H1 (cell line): ENCODE measurements at regions of chr6 and their contacts with region 1.

Region 1: DNA sequence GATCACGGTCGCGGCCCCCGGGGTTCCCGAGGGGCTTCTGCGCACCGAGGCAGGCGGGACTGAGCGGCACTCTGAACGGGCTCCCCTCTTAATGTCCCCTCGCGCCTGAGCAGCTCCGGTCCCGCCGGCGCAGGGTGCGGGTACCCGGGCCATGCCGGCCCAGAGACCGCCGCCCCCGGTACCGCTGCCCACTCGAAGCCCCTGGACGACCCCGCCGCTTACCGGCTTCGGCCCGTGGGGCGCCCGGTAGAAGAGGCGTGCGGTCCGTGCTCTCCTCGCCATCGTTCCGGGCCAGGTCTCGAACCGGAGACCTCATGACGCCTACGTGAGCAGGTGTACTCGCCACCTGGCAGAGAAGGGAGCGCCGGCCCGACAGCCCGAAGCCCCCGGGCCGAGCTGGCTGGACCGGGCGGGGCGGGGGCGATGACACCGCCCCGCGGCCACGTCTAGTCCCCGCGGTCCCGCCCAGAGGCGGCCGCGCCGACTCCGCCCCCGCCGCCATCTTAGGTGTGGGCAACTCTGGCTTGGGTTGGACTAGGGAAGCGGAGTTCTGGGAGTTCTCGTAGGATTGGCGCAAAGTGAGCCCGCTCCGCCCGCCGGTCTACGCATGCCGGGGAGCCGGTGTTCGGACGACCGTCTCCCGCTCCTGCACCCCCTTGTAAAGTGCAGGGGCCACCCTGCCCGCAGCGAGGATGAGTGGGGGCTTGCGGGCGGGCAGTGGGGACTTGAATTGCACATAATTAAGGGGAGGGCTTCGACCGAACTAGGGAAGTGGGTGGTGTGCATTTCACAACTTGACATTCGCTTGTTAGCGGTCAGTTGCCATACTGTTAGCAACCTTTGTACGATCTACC is at the start of gene SLC17A5:
- DNase-seq: peak; percentile 87 to 94
- H3K4me3 ChIP-seq: peak within 1 kb of the TSS; percentile 63 to 99 (median 86)
- H3K27ac ChIP-seq: peak within 1 kb of the TSS; percentile 71; the same call in 1 of the 2 replicates
- H3K4me1 ChIP-seq: peaks cover 0 to 9% (median 5%) of the 10 kb centered on the region in 4 experiments; a peak in 3 of 7 replicates
- H3K27me3 ChIP-seq: no peaks in the 10 kb centered on the region
- CTCF ChIP-seq: no peak
- EP300 ChIP-seq: 0 out of 3 replicates have a peak, but pooled peaks of 1 of the 2 experiments have one; percentile 38
- POLR2A ChIP-seq: peak; percentile 63 to 82
- RAD21 ChIP-seq: no peak
- total RNA-seq, gene SLC17A5: 11.9 and 14.2 TPM in 2 replicates

Region 2: DNA sequence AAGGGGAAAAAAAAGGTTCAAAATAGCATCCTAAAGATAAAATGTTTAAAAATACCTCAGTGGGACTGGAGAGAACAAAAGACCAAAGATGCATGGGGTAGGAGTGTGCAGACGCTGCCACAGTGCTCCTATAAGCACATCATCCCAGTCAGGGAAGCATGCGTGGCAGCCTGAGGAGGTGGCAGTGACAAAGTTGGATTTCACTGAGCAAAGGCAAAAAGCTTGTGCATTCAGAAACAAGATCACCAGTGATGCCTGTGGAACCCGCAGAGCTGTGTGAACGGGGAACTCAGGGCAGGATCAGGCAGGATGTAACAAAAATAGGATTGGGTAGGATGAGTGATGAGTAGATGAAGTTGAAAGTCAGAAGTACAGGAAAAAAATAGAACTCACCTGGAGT is 1651.4 kb before region 1 on chr6:
- CTCF ChIA-PET with region 1: no interaction called
- POLR2A ChIA-PET with region 1: no interaction called
- DNase-seq: no peak
- H3K4me3 ChIP-seq: no peak overlapping the region
- H3K27ac ChIP-seq: no peak overlapping the region
- H3K4me1 ChIP-seq: no peaks in the 10 kb centered on the region
- H3K27me3 ChIP-seq: no peaks in the 10 kb centered on the region
- CTCF ChIP-seq: no peak
- EP300 ChIP-seq: no peak
- POLR2A ChIP-seq: no peak
- RAD21 ChIP-seq: no peak

Region 3: DNA sequence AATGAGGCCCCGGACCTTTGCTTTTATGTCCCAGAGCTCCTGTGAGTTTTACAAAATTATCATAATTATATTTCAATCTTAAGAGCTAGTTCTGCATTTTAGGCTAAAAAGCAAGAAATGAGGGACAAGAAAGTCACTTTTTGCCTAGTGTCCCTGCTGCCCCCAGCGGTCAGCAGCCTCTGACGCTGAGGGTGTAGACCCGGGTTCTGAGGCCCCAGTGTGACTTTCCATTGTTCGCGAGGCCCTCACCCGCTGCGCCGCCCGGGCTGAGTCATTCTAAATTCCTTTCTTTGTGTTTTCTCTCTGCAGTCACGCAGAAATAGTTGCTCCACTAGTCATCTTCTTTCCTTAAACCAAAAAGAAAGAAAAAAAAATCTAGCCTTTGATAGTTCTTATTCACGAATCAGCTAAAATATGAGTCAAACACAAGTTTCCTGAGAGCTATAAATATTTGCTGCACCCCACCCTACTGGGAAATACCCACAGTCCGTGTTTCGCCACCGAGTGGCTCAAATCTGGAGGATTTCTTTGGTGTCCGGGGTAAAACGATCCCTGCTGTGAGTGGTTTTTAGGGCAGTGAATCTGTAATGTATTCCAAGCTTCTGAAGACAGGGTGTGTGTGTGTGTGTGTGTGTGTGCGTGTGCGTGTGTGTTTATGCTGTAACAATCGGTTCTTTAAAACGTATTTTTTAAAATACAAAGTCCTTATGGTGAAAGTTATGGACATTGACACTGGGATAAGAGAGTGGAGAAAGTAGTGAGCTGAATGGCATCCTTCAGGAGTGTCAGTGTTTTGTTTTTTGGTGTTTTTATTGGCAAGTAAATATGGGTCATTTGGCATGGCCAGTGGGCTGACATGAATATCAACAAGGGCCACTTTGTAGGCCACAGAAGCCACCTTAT is 73.3 kb before region 1 on chr6:
- CTCF ChIA-PET with region 1: interaction called, 3 read pairs
- POLR2A ChIA-PET with region 1: interaction called, 10 read pairs
- DNase-seq: peak; percentile 94
- H3K4me3 ChIP-seq: peak overlapping the region; percentile 7 to 48 (median 36); a peak in 4 of 8 replicates
- H3K27ac ChIP-seq: peak overlapping the region; percentile 97
- H3K4me1 ChIP-seq: peaks cover 21 to 36% (median 24%) of the 10 kb centered on the region in 4 experiments
- H3K27me3 ChIP-seq: no peaks in the 10 kb centered on the region
- CTCF ChIP-seq: peak; percentile 29 to 74 (median 69)
- EP300 ChIP-seq: peak; percentile 25 to 93; a peak in 2 of 3 replicates
- POLR2A ChIP-seq: 0 out of 3 replicates have a peak, but pooled peaks of 1 of the 2 experiments have one; percentile 15
- RAD21 ChIP-seq: peak in 1 of 2 experiments; percentile 45; a peak in 3 of 4 replicates

Region 4: DNA sequence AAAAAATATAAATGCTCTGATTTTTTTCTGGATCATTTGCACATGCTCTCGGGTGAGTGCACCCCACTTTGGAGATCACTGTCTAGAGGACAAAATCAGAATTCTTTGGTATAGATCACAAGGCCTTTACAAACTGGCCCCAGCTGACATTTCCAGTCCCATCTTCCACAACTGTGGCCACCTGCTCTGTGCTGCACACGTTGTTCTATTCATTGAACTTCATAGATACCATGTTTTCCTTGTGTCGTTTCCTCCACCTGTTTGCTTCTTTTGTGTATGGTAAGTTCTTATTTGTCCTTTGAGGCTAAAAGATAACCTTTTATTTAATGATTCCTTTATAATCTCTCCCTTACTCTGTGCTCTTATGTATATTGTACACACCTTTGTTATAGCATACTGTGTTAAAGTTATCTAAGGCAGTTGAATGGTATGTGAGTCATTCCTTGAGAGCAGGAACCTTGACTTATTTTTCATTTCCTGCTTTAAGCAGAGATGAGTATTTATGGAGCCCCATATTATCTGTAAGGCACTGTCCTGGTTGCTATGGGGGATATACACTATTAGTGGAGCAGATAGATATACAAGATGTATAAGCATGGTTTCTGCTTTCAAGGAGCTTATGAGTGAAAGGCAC is 12.0 kb after region 1 on chr6:
- CTCF ChIA-PET with region 1: no interaction called
- POLR2A ChIA-PET with region 1: interaction called, 10 read pairs
- DNase-seq: no peak
- H3K4me3 ChIP-seq: no peak overlapping the region
- H3K27ac ChIP-seq: no peak overlapping the region
- H3K4me1 ChIP-seq: no peaks in the 10 kb centered on the region
- H3K27me3 ChIP-seq: no peaks in the 10 kb centered on the region
- CTCF ChIP-seq: no peak
- EP300 ChIP-seq: no peak
- POLR2A ChIP-seq: no peak
- RAD21 ChIP-seq: no peak

Region 5: DNA sequence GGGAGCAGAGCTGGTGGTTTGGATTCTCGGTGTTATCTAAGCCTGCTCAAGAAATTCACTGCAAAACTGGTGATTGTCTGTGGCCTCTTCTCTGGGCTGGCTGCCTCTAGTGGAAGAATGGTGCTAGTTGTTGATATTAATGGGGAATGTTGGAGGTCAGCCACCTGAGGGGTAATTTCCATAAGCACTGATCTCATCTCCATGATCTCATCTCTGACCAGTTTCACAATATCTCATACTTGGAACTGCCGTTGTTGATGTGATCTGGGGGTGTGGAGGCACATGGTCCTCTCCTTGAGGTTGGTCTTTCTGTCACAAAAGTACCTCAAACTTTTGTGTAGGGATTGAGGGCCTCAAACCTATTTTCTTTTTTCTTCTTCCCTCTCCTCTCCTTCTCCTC is 144.8 kb after region 1 on chr6:
- CTCF ChIA-PET with region 1: no interaction called
- POLR2A ChIA-PET with region 1: no interaction called
- DNase-seq: no peak
- H3K4me3 ChIP-seq: no peak overlapping the region
- H3K27ac ChIP-seq: no peak overlapping the region
- H3K4me1 ChIP-seq: no peaks in the 10 kb centered on the region
- H3K27me3 ChIP-seq: no peaks in the 10 kb centered on the region
- CTCF ChIP-seq: peak in 2 of 3 experiments; percentile 34 to 58; a peak in 3 of 4 replicates
- EP300 ChIP-seq: no peak
- POLR2A ChIP-seq: no peak
- RAD21 ChIP-seq: peak; percentile 20 to 32; a peak in 2 of 4 replicates